ENCODE measurements at regions of chr6 and their contacts with region 1.

Region 1: DNA sequence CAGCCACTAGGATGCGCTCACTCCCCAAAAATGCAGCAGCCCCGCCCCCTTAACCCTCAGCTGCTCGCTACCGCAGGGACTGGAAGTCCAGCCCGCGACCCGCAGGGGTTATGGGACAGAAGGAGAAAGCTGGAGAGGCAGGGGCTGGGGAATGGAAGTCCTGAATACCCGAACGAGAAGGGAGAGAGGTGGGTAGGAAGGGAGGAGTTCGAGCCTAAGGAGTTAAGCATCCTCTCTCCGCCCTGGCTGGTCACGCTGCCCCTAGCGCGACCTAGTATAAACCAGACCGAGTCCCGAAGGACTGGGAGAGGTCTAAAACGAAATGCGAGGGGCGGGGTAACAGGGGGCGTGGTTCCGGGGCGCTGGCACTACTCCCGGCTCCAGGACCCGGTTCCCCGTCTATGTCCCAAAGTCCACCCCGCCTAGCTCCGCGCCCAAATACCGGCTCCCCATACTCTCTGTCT is 448 bp upstream of the DDAH2 start:
- DNase-seq: peak; percentile 66 to 82 (median 77)
- ATAC-seq: peak; percentile 78
- H3K4me3 ChIP-seq: peak overlapping the region; percentile 92
- H3K4me3 Mint-ChIP-seq: peak overlapping the region; percentile 83 to 100 (median 97)
- H3K27ac ChIP-seq: peak overlapping the region; percentile 65
- H3K27ac Mint-ChIP-seq: peak overlapping the region; percentile 78 to 96 (median 89)
- H3K4me1 ChIP-seq: peaks cover 18 to 20% of the 10 kb centered on the region in 2 donors
- H3K4me1 Mint-ChIP-seq: peaks cover 20 to 65% (median 55%) of the 10 kb centered on the region in 7 donors
- H3K27me3 ChIP-seq: no peaks in the 10 kb centered on the region
- H3K27me3 Mint-ChIP-seq: no peaks in the 10 kb centered on the region

Region 2: DNA sequence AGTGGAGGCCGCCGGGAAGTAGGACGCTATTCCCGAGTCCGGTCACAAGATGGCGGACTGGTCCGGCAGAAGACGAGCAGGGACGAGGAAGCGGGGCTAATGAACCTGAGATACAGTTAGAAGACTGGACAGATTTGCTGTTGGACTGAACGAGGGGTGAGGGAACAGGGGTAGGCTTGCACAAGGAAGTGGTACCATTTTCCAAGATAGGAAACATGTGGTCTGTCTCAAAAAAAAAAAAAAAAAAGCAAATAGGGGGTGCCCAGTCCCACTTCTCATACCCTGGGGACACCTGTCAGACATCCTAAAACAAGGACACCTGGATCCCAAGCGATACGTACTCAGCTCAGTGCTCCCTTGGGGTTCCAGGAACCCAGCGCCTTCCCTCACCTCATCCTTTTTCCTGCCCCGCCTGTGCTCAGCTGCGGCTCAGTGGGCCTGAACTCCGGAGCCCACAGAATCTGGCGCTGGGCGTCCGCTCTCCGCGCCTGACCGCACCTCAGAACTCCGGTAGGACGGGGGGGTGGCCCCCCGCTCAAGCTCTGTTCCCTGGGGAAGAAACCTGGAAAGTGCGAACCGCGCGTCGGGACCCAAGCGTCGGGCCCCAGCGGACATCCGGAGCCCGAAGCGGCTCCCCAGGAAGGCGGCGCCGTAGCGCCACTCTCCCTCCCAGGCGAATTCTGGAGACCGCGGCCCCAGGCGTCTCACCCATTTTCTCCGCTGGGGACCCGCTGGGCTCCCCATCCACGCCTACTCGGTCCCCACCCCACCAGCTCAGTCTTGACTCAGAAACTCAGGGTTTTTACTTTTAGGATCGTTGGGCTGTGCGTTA is 48.5 kb before region 1 on chr6 and contains the start of gene LY6G5C:
- CTCF ChIA-PET with region 1: interaction called, 3 read pairs
- POLR2A ChIA-PET with region 1: no interaction called
- intact Hi-C with region 1: loop called in 1 of 2 experiments (anchors 1 kb)
- DNase-seq: peak in 8 of 9 donors; percentile 28 to 65 (median 48)
- ATAC-seq: peak; percentile 80
- H3K4me3 ChIP-seq: peak within 1 kb of the TSS; percentile 78
- H3K4me3 Mint-ChIP-seq: peak within 1 kb of the TSS; percentile 86 to 98 (median 90)
- H3K27ac ChIP-seq: peak within 1 kb of the TSS; percentile 68
- H3K27ac Mint-ChIP-seq: peak within 1 kb of the TSS; percentile 60 to 86 (median 68)
- H3K4me1 ChIP-seq: peaks cover 15 to 16% of the 10 kb centered on the region in 2 donors
- H3K4me1 Mint-ChIP-seq: peaks cover 14 to 32% (median 19%) of the 10 kb centered on the region in 7 donors
- H3K27me3 ChIP-seq: no peaks in the 10 kb centered on the region
- H3K27me3 Mint-ChIP-seq: no peaks in the 10 kb centered on the region
- total RNA-seq, gene LY6G5C: 2.4 to 4.3 (median 3.1) TPM

Region 3: GRCh38 chr6:31769684-31770371 is 40.3 kb after region 1 on chr6:
- CTCF ChIA-PET with region 1: interaction called, 16 read pairs
- POLR2A ChIA-PET with region 1: no interaction called
- intact Hi-C with region 1: loop called (anchors 1 kb)
- DNase-seq: peak; percentile 56 to 85 (median 71)
- ATAC-seq: peak; percentile 89
- H3K4me3 ChIP-seq: no peak overlapping the region
- H3K4me3 Mint-ChIP-seq: peak overlapping the region in 3 of 10 donors; percentile 2 to 45 (median 7)
- H3K27ac ChIP-seq: no peak overlapping the region
- H3K27ac Mint-ChIP-seq: peak overlapping the region in 4 of 9 donors; percentile 6 to 68 (median 38)
- H3K4me1 ChIP-seq: peaks cover 23 to 27% of the 10 kb centered on the region in 2 donors
- H3K4me1 Mint-ChIP-seq: peaks cover 4 to 38% (median 34%) of the 10 kb centered on the region in 7 donors
- H3K27me3 ChIP-seq: no peaks in the 10 kb centered on the region
- H3K27me3 Mint-ChIP-seq: no peaks in the 10 kb centered on the region

Region 4: GRCh38 chr6:31806465-31807272 is 77.1 kb after region 1 on chr6 and contains the start of gene LSM2:
- CTCF ChIA-PET with region 1: interaction called, 6 read pairs
- POLR2A ChIA-PET with region 1: interaction called, 10 read pairs
- intact Hi-C with region 1: no loop called
- DNase-seq: peak; percentile 96 to 98 (median 98)
- ATAC-seq: peak; percentile 100
- H3K4me3 ChIP-seq: peak within 1 kb of the TSS; percentile 92
- H3K4me3 Mint-ChIP-seq: peak within 1 kb of the TSS; percentile 86 to 95 (median 92)
- H3K27ac ChIP-seq: peak within 1 kb of the TSS; percentile 89
- H3K27ac Mint-ChIP-seq: peak within 1 kb of the TSS; percentile 88 to 97 (median 93)
- H3K4me1 ChIP-seq: peaks cover 9 to 14% of the 10 kb centered on the region in 2 donors
- H3K4me1 Mint-ChIP-seq: peaks cover 16 to 47% (median 30%) of the 10 kb centered on the region in 7 donors
- H3K27me3 ChIP-seq: no peaks in the 10 kb centered on the region
- H3K27me3 Mint-ChIP-seq: no peaks in the 10 kb centered on the region
- total RNA-seq, gene LSM2: 22.9 to 94.5 (median 29.2) TPM

Region 5: DNA sequence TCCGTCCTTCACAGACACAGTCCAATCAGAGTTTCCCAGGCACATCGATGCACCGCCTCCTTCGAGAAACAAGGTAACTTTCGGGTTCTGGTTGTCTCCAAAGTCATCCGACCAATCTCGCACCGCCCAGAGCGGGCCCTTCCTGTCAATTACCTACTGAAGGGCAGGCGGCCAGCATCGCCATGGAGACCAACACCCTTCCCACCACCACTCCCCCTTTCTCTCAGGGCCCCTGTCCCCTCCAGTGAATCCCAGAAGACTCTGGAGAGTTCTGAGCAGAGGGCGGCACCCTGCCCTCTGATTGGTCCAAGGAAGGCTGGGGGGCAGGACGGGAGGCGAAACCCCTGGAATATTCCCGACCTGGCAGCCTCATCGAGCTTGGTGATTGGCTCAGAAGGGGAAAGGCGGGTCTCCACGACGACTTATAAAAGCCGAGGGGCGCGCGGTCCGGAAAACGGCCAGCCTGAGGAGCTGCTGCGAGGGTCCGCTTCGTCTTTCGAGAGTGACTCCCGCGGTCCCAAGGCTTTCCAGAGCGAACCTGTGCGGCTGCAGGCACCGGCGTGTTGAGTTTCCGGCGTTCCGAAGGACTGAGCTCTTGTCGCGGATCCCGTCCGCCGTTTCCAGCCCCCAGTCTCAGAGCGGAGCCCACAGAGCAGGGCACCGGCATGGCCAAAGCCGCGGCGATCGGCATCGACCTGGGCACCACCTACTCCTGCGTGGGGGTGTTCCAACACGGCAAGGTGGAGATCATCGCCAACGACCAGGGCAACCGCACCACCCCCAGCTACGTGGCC is 97.9 kb after region 1 on chr6 and contains the start of gene HSPA1B:
- CTCF ChIA-PET with region 1: interaction called, 23 read pairs
- POLR2A ChIA-PET with region 1: interaction called, 33 read pairs
- intact Hi-C with region 1: loop called (anchors 1 kb)
- DNase-seq: peak; percentile 55 to 96 (median 82)
- ATAC-seq: peak; percentile 80
- H3K4me3 ChIP-seq: peak within 1 kb of the TSS; percentile 74
- H3K4me3 Mint-ChIP-seq: peak within 1 kb of the TSS; percentile 85 to 97 (median 90)
- H3K27ac ChIP-seq: peak within 1 kb of the TSS; percentile 72
- H3K27ac Mint-ChIP-seq: peak within 1 kb of the TSS; percentile 93 to 99 (median 97)
- H3K4me1 ChIP-seq: peaks cover 12 to 17% of the 10 kb centered on the region in 2 donors
- H3K4me1 Mint-ChIP-seq: peaks cover 11 to 51% (median 46%) of the 10 kb centered on the region in 7 donors
- H3K27me3 ChIP-seq: no peaks in the 10 kb centered on the region
- H3K27me3 Mint-ChIP-seq: no peaks in the 10 kb centered on the region
- total RNA-seq, gene HSPA1B: 8.6 to 68.9 (median 28.9) TPM